ENCODE measurements at regions of chr19 and their contacts with region 1.

Region 1: DNA sequence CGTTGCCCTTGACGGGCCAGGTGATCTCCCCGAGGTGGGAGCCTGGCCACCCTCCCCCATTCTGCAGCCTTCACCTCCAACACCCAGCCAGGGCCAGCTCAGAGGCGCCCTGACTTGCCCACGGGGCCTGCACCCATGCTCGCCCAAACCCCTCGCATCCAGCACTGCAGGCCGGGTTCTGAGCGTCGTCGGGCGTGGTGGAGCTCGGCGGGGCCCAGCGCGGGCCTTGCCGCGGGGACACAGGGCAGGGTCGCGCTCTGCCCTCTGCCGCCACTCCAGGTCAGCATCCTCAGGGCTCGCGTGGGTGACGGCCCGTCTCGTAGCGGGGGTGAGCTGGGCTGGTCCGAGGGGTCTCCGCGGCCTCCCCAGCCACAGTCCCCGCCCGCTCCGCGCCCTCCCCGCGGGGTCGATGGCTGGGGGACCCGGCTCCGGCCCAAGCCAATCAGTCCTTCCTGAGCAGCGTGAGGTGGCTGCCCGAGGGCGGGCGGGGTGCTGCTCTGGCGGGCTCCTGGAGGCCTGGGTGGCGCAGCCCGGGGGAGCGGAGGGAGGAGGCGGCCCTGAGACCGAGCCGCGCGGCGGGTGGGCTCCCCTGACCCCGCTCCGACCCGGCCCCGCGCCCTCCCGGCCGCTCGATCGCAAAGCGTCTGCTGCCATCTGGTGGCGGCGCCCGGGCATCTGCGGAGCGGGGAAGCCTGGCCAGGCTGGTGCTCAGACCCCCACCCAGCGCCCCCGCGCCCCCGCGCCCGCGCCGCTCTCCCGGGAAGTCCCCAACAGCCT is 61.4 kb downstream of the CCNE1 start:
- DNase-seq: peak; percentile 25 to 88 (median 70)

Region 2: DNA sequence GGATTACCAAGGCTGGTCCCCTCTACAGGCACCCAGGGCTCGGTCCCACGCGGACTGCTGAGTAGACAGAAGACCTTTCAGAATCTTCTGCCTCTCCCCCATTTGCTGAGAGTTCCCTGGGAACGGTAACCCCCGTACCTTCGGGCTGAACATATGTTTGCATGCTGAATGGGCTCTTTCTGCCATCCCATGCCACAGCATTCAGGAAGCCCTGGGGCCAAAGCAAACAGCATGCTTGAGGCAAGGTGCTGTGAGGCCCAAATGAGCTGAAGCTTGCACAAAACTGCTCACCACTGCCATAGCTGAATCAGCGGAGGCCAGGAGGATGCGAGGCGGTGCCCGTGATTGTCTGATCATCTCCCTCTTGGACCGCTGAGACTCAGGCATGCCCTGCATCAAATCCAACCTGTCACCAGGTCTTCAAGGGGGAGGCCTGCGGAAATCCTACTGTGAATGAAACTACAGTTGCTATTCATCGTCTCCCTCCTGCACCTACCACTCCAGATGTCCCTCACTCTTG is 141.8 kb before region 1 on chr19:
- intact Hi-C with region 1: loop called (anchors 5 kb)
- DNase-seq: no peak

Region 3: GRCh38 chr19:29761575-29762232 is 111.5 kb before region 1 on chr19:
- intact Hi-C with region 1: loop called (anchors 10 kb)
- DNase-seq: peak in 3 of 42 donors; percentile 5 to 46 (median 42)

Region 4: DNA sequence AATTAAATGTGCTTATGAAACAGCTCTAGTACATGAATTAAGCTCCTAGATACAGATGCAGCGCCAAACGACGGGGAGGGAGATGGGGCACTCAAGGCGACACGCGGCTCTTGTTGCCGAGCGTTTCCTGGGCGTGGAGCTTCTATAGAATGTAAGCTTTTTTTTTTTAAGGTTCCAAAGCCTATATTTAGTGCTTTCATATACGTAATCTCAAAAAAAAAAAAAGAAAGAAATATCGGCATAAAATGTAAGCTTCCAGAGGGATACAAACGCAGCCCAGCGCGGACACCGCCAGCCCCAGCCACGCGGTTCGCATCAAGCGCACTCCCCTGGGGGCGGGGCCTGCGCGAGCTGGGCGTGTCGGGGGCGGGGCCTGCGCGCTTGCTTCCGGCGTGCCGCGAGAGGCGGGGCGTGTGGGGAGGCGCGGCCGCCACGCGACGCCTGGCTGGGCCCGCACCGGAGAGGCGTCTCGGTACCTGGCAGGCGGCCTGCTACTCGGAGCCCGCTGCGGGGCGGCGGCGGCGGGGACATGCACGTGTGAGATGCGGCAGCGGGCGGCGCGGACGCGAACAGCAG is 68.7 kb after region 1 on chr19 and contains the start of gene URI1:
- intact Hi-C with region 1: no loop called
- DNase-seq: peak; percentile 74 to 97 (median 94)

Measured in head of caudate nucleus (tissue), 42 donors.